ENCODE measurements at regions of chr12 and their contacts with region 1.

Region 1: GRCh38 chr12:92987362-92987761 is 58.3 kb upstream of the EEA1 start:
- DNase-seq: peak; percentile 57
- H3K27ac ChIP-seq: no peak overlapping the region
- CTCF ChIP-seq: peak; percentile 61

Region 2: DNA sequence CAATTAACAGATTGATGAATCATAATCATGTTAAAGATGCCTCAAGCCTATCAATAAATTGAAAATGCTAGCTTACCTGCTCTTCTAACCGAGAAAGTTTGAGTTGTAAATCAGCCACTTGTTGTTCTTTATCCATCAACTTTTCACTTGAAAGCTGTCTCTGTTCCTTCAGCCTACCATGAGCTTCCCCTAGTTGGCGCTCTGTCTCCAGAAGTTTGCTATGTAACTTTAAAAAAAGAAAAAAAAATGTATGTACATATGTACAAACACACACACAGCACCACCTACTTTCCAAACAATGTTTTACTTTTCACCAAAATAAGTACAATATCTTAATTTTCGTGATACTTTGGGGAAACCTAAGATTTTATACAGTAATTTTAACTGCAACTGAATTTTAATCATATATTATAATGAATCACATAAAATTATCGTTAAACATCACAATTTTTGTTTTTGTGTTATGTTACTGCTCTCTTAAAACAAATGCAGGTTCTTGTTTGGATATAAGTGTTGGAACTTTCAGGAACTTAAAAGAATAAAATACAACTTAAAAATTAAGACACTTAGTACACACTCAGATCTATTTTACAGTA is 159.4 kb before region 1 on chr12:
- CTCF ChIA-PET with region 1: interaction called, 10 read pairs
- POLR2A ChIA-PET with region 1: no interaction called
- DNase-seq: peak; percentile 49
- H3K27ac ChIP-seq: no peak overlapping the region
- CTCF ChIP-seq: peak; percentile 90

Region 3: GRCh38 chr12:92899388-92900001 is 87.9 kb before region 1 on chr12:
- CTCF ChIA-PET with region 1: no interaction called
- POLR2A ChIA-PET with region 1: no interaction called
- DNase-seq: peak; percentile 89
- H3K27ac ChIP-seq: peak overlapping the region; percentile 82
- CTCF ChIP-seq: no peak

Region 4: GRCh38 chr12:93380480-93381121 is 393.2 kb after region 1 on chr12:
- CTCF ChIA-PET with region 1: interaction called, 10 read pairs
- POLR2A ChIA-PET with region 1: no interaction called
- DNase-seq: peak; percentile 52
- H3K27ac ChIP-seq: no peak overlapping the region
- CTCF ChIP-seq: peak; percentile 57

Region 5: DNA sequence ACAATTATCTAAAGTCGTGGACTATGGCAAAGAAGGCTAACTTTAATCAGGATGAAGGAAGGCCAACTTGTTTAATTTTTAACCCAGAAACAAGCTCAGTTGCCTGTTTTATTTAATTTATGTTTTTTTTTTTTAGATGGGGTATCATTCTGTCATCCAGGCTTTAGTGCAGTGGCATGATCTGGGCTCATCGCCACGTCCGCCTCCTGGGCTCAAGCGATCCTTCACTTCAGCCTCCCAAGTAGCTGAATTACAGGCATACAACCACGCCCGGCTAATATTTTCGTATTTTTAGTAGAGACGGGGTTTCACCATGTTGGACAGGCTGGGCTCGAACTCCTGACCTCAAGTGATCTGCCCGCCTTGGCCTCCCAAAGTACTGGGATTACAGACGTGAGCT is 410.1 kb after region 1 on chr12:
- CTCF ChIA-PET with region 1: interaction called, 18 read pairs
- POLR2A ChIA-PET with region 1: no interaction called
- DNase-seq: no peak
- H3K27ac ChIP-seq: no peak overlapping the region
- CTCF ChIP-seq: no peak

Region 6: GRCh38 chr12:93419388-93420034 is 432.1 kb after region 1 on chr12:
- CTCF ChIA-PET with region 1: interaction called, 13 read pairs
- POLR2A ChIA-PET with region 1: no interaction called
- DNase-seq: peak; percentile 42
- H3K27ac ChIP-seq: no peak overlapping the region
- CTCF ChIP-seq: peak; percentile 70

Measured in RWPE1 (cell line).